Kidney (tissue), 22 donors: ENCODE measurements at regions of chr11 and their contacts with region 1.

Region 1: GRCh38 chr11:2532704-2533586 is 88.1 kb downstream of the KCNQ1 start:
- DNase-seq: peak; percentile 95 to 97 (median 96)
- H3K4me3 ChIP-seq: peak overlapping the region in 1 of 3 donors; percentile 18
- H3K27ac ChIP-seq: no peak overlapping the region
- H3K4me1 ChIP-seq: peaks cover 0 to 15% (median 0%) of the 10 kb centered on the region in 3 donors
- H3K27me3 ChIP-seq: no peaks in the 10 kb centered on the region
- CTCF ChIP-seq: peak; percentile 100

Region 2: DNA sequence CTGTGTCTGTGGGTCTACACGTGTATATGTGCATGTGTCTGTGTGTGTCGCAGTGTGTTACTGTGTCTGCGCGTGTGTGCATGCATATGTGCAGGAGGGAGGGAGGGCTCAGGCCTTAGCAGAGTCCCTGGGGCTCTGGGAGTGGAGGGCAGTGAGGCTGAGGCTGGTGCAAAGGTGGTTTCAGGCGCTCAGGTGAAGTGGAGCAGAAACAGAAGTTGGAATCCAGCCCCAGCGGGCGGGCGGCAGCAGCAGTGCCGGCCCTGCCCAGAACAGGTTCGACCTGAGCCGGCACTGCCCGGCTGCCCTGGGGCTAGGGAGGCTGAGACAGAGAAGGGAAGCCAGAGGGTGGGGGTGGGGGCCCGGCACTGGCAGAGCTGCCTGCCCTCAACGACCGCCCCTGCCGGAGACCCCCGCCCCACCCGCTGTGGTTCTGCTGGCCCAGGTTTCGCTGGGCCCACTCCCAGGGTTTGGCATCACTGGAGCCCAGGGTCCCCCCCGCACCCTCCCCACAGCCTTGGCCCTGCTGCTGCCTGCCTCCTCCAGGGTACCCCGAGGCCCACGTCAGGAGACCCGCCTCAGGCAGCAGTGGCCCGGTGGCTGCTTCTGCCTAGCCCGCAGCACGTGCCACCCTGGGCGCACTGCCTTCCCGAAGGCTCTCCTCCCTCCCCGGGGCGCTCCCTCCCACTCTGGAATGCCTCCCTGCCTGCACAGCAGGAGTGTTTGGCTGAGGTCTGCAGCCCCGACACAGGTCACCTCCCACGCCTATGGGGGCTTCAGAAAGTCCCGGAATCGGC is 275.8 kb before region 1 on chr11:
- intact Hi-C with region 1: no loop called
- DNase-seq: peak; percentile 77 to 95 (median 84)
- H3K4me3 ChIP-seq: no peak overlapping the region
- H3K27ac ChIP-seq: peak overlapping the region; percentile 59 to 76
- H3K4me1 ChIP-seq: peaks cover 0 to 7% (median 5%) of the 10 kb centered on the region in 3 donors
- H3K27me3 ChIP-seq: no peaks in the 10 kb centered on the region
- CTCF ChIP-seq: no peak

Region 3: GRCh38 chr11:2428322-2428795 is 104.6 kb before region 1 on chr11:
- intact Hi-C with region 1: loop called (anchors 5 kb)
- DNase-seq: peak; percentile 67 to 87 (median 76)
- H3K4me3 ChIP-seq: no peak overlapping the region
- H3K27ac ChIP-seq: no peak overlapping the region
- H3K4me1 ChIP-seq: no peaks in the 10 kb centered on the region
- H3K27me3 ChIP-seq: no peaks in the 10 kb centered on the region
- CTCF ChIP-seq: peak; percentile 96

Region 4: DNA sequence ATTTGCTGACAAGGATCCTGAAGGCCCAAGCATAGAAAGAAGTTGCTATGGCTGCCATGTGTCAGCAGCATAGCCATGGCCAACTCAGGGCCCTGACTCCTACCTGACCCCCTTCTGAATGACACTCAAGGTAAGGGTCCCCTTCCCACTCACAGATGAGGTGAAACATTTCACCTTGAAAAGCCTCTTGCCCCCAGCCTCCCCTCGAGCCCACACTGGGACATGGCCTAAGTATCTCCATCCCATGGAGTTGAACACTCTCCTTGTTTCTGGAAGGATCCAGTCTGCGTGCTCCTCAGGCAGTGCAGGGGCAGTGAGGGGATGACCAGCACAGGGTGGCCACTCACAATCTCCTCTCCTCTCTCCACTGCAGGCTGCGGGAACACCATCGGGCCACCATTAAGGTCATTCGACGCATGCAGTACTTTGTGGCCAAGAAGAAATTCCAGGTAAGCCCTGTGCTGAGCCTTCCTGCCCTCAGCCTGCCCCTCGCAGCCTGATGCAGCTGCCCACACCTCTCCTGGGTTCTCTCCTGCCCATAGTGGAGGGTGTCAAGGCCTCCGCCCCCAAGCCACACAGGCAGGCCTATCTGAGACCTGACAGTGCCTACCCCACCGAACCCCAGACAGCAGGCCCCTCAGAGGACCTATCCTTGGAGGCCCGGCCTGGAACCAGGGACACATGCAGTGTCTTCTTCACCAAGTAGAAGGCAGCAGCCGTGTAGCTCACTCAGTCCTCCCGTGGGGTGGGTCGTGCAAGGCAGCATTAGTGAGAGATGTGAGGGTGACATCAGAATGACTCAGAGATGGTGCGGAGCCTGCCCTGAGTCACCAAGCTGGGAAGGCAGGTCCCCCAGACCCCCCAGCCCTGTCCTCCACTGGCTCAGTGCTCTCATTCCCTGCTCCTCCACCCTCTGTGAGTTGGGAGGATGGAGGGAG is 235.8 kb after region 1 on chr11:
- intact Hi-C with region 1: no loop called
- DNase-seq: peak in 2 of 5 donors; percentile 5 to 50
- H3K4me3 ChIP-seq: no peak overlapping the region
- H3K27ac ChIP-seq: no peak overlapping the region
- H3K4me1 ChIP-seq: no peaks in the 10 kb centered on the region
- H3K27me3 ChIP-seq: no peaks in the 10 kb centered on the region
- CTCF ChIP-seq: no peak

Region 5: DNA sequence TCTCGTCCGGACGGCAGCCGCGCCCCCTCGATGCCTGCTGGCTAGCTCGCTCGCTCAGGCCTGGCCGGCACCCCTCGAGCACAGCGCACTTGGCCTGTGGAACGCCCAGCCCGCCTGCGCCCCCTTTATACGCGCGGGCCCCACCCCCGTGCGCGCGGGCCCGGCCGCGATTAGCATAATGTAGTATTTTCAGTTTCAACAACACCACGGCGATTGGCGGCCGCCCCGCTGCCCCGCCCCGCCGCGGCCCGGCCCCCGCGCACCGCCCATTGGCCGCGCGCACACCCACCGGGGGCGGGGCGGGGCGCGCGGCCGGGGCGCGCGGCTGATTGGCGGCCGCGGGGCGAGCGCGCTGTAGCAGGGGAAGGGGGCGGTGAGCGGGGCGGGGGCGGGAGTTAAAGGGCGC is 352.7 kb after region 1 on chr11 and contains the start of gene CDKN1C:
- intact Hi-C with region 1: loop called (anchors 2 kb)
- DNase-seq: peak; percentile 93 to 97 (median 96)
- H3K4me3 ChIP-seq: peak within 1 kb of the TSS; percentile 57 to 74 (median 70)
- H3K27ac ChIP-seq: peak within 1 kb of the TSS; percentile 76 to 90
- H3K4me1 ChIP-seq: peaks cover 0 to 12% (median 6%) of the 10 kb centered on the region in 3 donors
- H3K27me3 ChIP-seq: no peaks in the 10 kb centered on the region
- CTCF ChIP-seq: no peak
- total RNA-seq, gene CDKN1C: 54.8 TPM